ENCODE measurements at regions of chr12 and their contacts with region 1.

Region 1: DNA sequence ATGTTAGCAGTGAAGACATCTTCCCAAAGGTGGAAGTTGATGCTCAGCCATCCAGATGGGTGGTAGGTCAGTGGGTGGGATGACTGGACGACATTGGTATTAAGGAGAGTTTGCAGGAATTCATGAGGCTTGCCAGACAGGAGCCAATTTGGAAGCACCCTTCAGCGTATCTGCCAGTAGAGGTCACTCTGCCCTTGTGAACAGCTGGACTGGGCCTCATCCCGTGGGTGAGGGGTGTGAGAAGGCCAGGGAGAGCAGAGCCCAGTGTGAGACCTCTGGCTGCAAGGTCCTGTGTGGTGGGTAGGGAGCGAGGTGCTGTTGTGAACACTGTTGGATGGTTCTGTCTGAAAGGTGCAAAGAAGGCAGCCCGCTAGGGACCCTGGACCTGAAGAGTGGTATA is 37.7 kb downstream of the SLC5A8 start:
- DNase-seq: peak; percentile 50
- H3K4me3 ChIP-seq: no peak overlapping the region
- H3K27ac ChIP-seq: no peak overlapping the region
- H3K4me1 ChIP-seq: no peaks in the 10 kb centered on the region
- H3K27me3 ChIP-seq: no peaks in the 10 kb centered on the region
- CTCF ChIP-seq: peak; percentile 52

Region 2: DNA sequence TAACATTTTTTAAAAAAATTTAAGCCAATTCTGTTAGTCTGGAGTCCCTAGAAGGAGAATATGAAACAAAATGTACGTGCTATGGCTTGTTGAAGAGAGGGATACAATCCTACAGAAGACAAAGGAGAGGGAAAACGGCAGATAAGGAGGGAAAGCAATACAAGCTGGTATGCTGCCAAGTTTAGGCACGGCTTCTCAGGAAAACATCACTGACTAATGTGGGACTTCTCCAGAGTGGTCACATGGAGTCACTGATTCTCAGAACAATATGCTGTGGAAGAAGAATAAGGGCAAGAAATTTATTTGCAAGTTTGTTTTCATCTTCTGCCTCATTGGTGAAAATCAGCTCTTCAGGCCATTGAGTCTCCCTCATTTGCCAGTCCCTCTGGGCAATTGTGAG is 721.6 kb before region 1 on chr12:
- CTCF ChIA-PET with region 1: no interaction called
- POLR2A ChIA-PET with region 1: no interaction called
- intact Hi-C with region 1: no loop called
- DNase-seq: no peak
- H3K4me3 ChIP-seq: no peak overlapping the region
- H3K27ac ChIP-seq: no peak overlapping the region
- H3K4me1 ChIP-seq: no peaks in the 10 kb centered on the region
- H3K27me3 ChIP-seq: no peaks in the 10 kb centered on the region
- CTCF ChIP-seq: no peak

Region 3: DNA sequence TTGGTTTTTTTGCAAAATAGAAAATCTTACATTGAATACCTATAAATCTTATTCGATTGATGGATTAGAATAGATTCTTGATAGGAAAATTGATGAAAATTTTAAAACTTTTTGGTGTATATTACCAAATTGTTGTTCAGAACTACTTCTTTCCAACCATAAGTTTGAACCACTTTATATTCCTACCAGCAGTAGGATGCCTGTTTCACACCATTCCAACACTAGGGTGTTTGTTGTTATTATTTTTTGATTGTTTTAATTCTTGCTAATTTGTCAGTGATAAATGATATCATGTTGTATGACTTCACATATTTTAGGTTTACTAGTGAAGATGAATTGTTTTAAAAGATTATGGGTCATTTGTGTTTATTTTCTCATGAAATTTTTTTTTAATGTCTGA is 150.9 kb after region 1 on chr12:
- CTCF ChIA-PET with region 1: no interaction called
- POLR2A ChIA-PET with region 1: no interaction called
- intact Hi-C with region 1: loop called (anchors 1 kb)
- DNase-seq: no peak
- H3K4me3 ChIP-seq: no peak overlapping the region
- H3K27ac ChIP-seq: no peak overlapping the region
- H3K4me1 ChIP-seq: no peaks in the 10 kb centered on the region
- H3K27me3 ChIP-seq: no peaks in the 10 kb centered on the region
- CTCF ChIP-seq: no peak

Measured in A673 (cell line).